CD8-positive, alpha-beta T cell (primary cell): ENCODE measurements at regions of chr18 and their contacts with region 1.

Region 1: GRCh38 chr18:63903851-63904570 is 3.7 kb upstream of the SERPINB10 start:
- DNase-seq: no peak
- ATAC-seq: no peak
- H3K4me3 ChIP-seq: no peak overlapping the region
- H3K4me3 Mint-ChIP-seq: no peak overlapping the region
- H3K27ac ChIP-seq: no peak overlapping the region
- H3K27ac Mint-ChIP-seq: no peak overlapping the region
- H3K4me1 ChIP-seq: no peaks in the 10 kb centered on the region
- H3K4me1 Mint-ChIP-seq: no peaks in the 10 kb centered on the region
- H3K27me3 ChIP-seq: no peaks in the 10 kb centered on the region
- H3K27me3 Mint-ChIP-seq: peaks cover 12% of the 10 kb centered on the region
- CTCF ChIP-seq: no peak

Region 2: DNA sequence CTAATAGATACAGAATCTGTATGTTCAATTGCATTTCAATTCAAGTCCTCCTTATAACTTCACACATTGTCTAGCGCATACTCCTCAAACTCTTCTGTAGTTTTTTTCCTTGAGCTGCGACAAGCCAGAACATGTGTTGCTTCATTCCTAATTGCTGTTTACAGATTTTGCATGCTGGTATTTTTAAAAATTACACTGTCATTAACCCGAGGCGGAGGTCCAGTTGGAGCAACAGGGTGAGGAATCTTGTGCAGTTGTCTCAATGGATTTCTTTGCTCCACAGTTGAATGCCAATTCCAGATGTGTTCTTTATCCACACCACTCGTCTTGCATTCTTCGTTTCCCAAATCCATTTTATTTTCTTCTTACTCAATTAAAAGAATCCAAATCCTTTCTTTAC is 333.3 kb before region 1 on chr18:
- CTCF ChIA-PET with region 1: no interaction called
- POLR2A ChIA-PET with region 1: no interaction called
- intact Hi-C with region 1: no loop called
- DNase-seq: no peak
- ATAC-seq: no peak
- H3K4me3 ChIP-seq: no peak overlapping the region
- H3K4me3 Mint-ChIP-seq: no peak overlapping the region
- H3K27ac ChIP-seq: no peak overlapping the region
- H3K27ac Mint-ChIP-seq: no peak overlapping the region
- H3K4me1 ChIP-seq: no peaks in the 10 kb centered on the region
- H3K4me1 Mint-ChIP-seq: no peaks in the 10 kb centered on the region
- H3K27me3 ChIP-seq: peaks cover 0 to 2% of the 10 kb centered on the region in 2 experiments
- H3K27me3 Mint-ChIP-seq: peaks cover 6% of the 10 kb centered on the region
- CTCF ChIP-seq: no peak

Region 3: GRCh38 chr18:63848159-63848558 is 55.9 kb before region 1 on chr18:
- CTCF ChIA-PET with region 1: no interaction called
- POLR2A ChIA-PET with region 1: no interaction called
- intact Hi-C with region 1: loop called in 1 of 2 experiments (anchors 5 kb)
- DNase-seq: peak in 2 of 9 experiments; percentile 25
- ATAC-seq: no peak
- H3K4me3 ChIP-seq: no peak overlapping the region
- H3K4me3 Mint-ChIP-seq: no peak overlapping the region
- H3K27ac ChIP-seq: no peak overlapping the region
- H3K27ac Mint-ChIP-seq: no peak overlapping the region
- H3K4me1 ChIP-seq: no peaks in the 10 kb centered on the region
- H3K4me1 Mint-ChIP-seq: no peaks in the 10 kb centered on the region
- H3K27me3 ChIP-seq: peaks cover 0 to 4% of the 10 kb centered on the region in 2 experiments
- H3K27me3 Mint-ChIP-seq: peaks cover 5% of the 10 kb centered on the region
- CTCF ChIP-seq: no peak